CD8-positive, alpha-beta T cell (primary cell): ENCODE measurements at regions of chr6 and their contacts with region 1.

Region 1: GRCh38 chr6:118618679-118619377 is 32.6 kb downstream of the CEP85L start:
- DNase-seq: peak; percentile 38 to 81 (median 66)
- ATAC-seq: peak; percentile 96
- H3K4me3 ChIP-seq: no peak overlapping the region
- H3K4me3 Mint-ChIP-seq: no peak overlapping the region
- H3K27ac ChIP-seq: no peak overlapping the region
- H3K27ac Mint-ChIP-seq: peak overlapping the region; percentile 83
- H3K4me1 ChIP-seq: peaks cover 7% of the 10 kb centered on the region
- H3K4me1 Mint-ChIP-seq: peaks cover 64% of the 10 kb centered on the region
- H3K27me3 ChIP-seq: no peaks in the 10 kb centered on the region
- H3K27me3 Mint-ChIP-seq: no peaks in the 10 kb centered on the region
- CTCF ChIP-seq: peak; percentile 79

Region 2: GRCh38 chr6:117346142-117346930 is 1272.5 kb before region 1 on chr6:
- CTCF ChIA-PET with region 1: no interaction called
- POLR2A ChIA-PET with region 1: no interaction called
- intact Hi-C with region 1: loop called in 1 of 2 experiments (anchors 5 kb)
- DNase-seq: peak in 2 of 9 experiments; percentile 14 to 36
- ATAC-seq: no peak
- H3K4me3 ChIP-seq: no peak overlapping the region
- H3K4me3 Mint-ChIP-seq: no peak overlapping the region
- H3K27ac ChIP-seq: no peak overlapping the region
- H3K27ac Mint-ChIP-seq: no peak overlapping the region
- H3K4me1 ChIP-seq: no peaks in the 10 kb centered on the region
- H3K4me1 Mint-ChIP-seq: no peaks in the 10 kb centered on the region
- H3K27me3 ChIP-seq: no peaks in the 10 kb centered on the region
- H3K27me3 Mint-ChIP-seq: peaks cover 11% of the 10 kb centered on the region
- CTCF ChIP-seq: peak; percentile 72

Region 3: GRCh38 chr6:117976030-117976651 is 642.7 kb before region 1 on chr6:
- CTCF ChIA-PET with region 1: no interaction called
- POLR2A ChIA-PET with region 1: no interaction called
- intact Hi-C with region 1: loop called (anchors 2 to 5 kb)
- DNase-seq: peak in 2 of 9 experiments; percentile 38 to 55
- ATAC-seq: no peak
- H3K4me3 ChIP-seq: no peak overlapping the region
- H3K4me3 Mint-ChIP-seq: no peak overlapping the region
- H3K27ac ChIP-seq: no peak overlapping the region
- H3K27ac Mint-ChIP-seq: no peak overlapping the region
- H3K4me1 ChIP-seq: no peaks in the 10 kb centered on the region
- H3K4me1 Mint-ChIP-seq: no peaks in the 10 kb centered on the region
- H3K27me3 ChIP-seq: no peaks in the 10 kb centered on the region
- H3K27me3 Mint-ChIP-seq: peaks cover 19% of the 10 kb centered on the region
- CTCF ChIP-seq: peak; percentile 56

Region 4: DNA sequence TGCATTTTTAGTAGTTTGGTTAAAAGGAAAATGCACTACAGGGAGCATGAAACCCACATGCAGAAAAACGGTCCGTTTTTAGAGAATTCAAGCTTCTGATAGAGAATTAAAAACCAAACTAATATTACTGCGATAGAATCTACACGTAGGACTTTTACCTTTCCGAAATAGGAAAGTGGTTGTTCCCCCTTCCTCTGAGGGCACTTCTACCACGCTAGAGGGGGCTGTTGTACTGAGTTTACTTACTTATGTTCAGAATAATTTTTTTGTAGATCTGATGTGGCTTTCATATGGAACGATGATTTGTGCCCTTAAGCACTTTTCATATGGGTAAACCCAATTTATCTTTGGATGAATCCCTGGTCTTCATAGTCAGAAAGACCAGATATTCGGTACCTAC is 335.1 kb before region 1 on chr6:
- CTCF ChIA-PET with region 1: interaction called, 3 read pairs
- POLR2A ChIA-PET with region 1: no interaction called
- intact Hi-C with region 1: loop called (anchors 1 to 2 kb)
- DNase-seq: peak in 8 of 9 experiments; percentile 14 to 74 (median 52)
- ATAC-seq: peak; percentile 61
- H3K4me3 ChIP-seq: no peak overlapping the region
- H3K4me3 Mint-ChIP-seq: no peak overlapping the region
- H3K27ac ChIP-seq: no peak overlapping the region
- H3K27ac Mint-ChIP-seq: no peak overlapping the region
- H3K4me1 ChIP-seq: no peaks in the 10 kb centered on the region
- H3K4me1 Mint-ChIP-seq: peaks cover 2% of the 10 kb centered on the region
- H3K27me3 ChIP-seq: no peaks in the 10 kb centered on the region
- H3K27me3 Mint-ChIP-seq: peaks cover 11% of the 10 kb centered on the region
- CTCF ChIP-seq: peak; percentile 61

Region 5: DNA sequence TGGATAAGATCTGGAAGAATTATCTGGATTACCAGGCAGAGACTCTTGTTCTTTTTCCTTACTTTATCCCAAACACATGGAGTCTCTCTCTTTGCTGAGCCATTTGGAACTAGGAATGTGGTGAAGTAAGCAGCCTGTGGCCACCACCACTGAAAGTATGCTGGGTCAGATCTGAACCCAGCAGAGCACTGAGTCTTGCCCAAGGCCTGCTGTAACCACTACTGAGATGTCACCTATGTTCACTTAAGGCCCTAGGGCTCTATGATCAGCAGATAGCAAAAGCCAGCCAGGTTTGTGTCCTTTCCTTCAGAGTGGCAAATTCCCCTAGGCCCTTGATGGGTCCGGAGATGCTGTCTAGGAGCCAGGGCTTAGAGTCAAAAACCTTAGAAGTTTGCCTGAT is 174.0 kb before region 1 on chr6:
- CTCF ChIA-PET with region 1: no interaction called
- POLR2A ChIA-PET with region 1: no interaction called
- intact Hi-C with region 1: no loop called
- DNase-seq: no peak
- ATAC-seq: no peak
- H3K4me3 ChIP-seq: no peak overlapping the region
- H3K4me3 Mint-ChIP-seq: no peak overlapping the region
- H3K27ac ChIP-seq: no peak overlapping the region
- H3K27ac Mint-ChIP-seq: no peak overlapping the region
- H3K4me1 ChIP-seq: no peaks in the 10 kb centered on the region
- H3K4me1 Mint-ChIP-seq: no peaks in the 10 kb centered on the region
- H3K27me3 ChIP-seq: no peaks in the 10 kb centered on the region
- H3K27me3 Mint-ChIP-seq: no peaks in the 10 kb centered on the region
- CTCF ChIP-seq: no peak

Region 6: DNA sequence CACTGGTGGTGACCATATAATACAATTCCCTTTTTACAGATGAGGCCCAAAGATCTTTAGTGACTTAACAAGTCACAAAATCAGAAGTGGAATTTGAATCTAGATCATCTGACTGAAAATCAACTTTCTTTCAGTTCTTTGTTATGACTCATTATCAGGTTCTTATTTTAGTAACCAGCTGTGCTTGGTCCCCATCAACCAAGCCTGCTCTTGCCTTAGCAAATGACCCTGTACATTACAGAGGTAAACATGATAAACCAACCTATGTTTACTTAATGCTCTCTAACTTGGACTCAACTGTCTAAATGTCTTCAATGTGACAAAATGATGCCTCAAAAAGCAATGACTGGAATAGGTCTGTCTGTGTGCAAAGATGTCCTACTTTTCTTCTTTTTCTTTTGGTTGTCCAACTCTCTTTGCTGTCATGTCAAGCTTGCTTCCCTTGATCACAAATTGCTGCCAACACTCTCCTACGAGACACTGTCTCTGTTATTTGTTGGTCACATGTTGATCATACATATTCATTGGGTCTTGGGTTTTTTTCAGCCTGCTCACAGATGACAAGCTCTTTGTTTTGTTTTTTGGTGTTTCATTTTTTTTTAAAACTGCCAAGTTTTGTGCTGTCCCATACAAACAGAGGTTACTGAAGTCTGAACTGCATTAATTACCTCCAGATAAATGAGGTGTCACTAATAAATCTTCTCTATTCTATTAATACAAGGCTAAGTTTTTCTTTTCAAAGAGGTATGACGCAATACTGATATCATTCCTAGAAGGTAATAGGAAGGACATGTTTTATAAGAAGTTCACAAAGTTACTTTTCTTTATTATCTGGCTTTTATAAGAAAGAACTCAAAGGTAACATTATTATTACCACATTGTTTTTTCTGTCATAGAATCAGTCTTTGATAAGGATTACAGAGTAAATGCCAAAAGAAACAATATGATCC is 133.0 kb before region 1 on chr6:
- CTCF ChIA-PET with region 1: no interaction called
- POLR2A ChIA-PET with region 1: no interaction called
- intact Hi-C with region 1: loop called in 1 of 2 experiments (anchors 5 kb)
- DNase-seq: no peak
- ATAC-seq: no peak
- H3K4me3 ChIP-seq: no peak overlapping the region
- H3K4me3 Mint-ChIP-seq: no peak overlapping the region
- H3K27ac ChIP-seq: no peak overlapping the region
- H3K27ac Mint-ChIP-seq: no peak overlapping the region
- H3K4me1 ChIP-seq: no peaks in the 10 kb centered on the region
- H3K4me1 Mint-ChIP-seq: no peaks in the 10 kb centered on the region
- H3K27me3 ChIP-seq: no peaks in the 10 kb centered on the region
- H3K27me3 Mint-ChIP-seq: no peaks in the 10 kb centered on the region
- CTCF ChIP-seq: no peak

Region 7: GRCh38 chr6:118813775-118814174 is 194.9 kb after region 1 on chr6:
- CTCF ChIA-PET with region 1: no interaction called
- POLR2A ChIA-PET with region 1: no interaction called
- intact Hi-C with region 1: no loop called
- DNase-seq: no peak
- ATAC-seq: no peak
- H3K4me3 ChIP-seq: no peak overlapping the region
- H3K4me3 Mint-ChIP-seq: no peak overlapping the region
- H3K27ac ChIP-seq: no peak overlapping the region
- H3K27ac Mint-ChIP-seq: peak overlapping the region; percentile 76
- H3K4me1 ChIP-seq: peaks cover 21% of the 10 kb centered on the region
- H3K4me1 Mint-ChIP-seq: peaks cover 43% of the 10 kb centered on the region
- H3K27me3 ChIP-seq: no peaks in the 10 kb centered on the region
- H3K27me3 Mint-ChIP-seq: no peaks in the 10 kb centered on the region
- CTCF ChIP-seq: no peak